HAP-1 (cell line): ENCODE measurements at regions of chr3 and their contacts with region 1.

Region 1: GRCh38 chr3:146218880-146219866 is 31.7 kb downstream of the PLSCR4 start:
- DNase-seq: peak; percentile 36 to 52
- H3K4me3 ChIP-seq: no peak overlapping the region
- H3K4me1 ChIP-seq: no peaks in the 10 kb centered on the region
- H3K27me3 ChIP-seq: no peaks in the 10 kb centered on the region

Region 2: DNA sequence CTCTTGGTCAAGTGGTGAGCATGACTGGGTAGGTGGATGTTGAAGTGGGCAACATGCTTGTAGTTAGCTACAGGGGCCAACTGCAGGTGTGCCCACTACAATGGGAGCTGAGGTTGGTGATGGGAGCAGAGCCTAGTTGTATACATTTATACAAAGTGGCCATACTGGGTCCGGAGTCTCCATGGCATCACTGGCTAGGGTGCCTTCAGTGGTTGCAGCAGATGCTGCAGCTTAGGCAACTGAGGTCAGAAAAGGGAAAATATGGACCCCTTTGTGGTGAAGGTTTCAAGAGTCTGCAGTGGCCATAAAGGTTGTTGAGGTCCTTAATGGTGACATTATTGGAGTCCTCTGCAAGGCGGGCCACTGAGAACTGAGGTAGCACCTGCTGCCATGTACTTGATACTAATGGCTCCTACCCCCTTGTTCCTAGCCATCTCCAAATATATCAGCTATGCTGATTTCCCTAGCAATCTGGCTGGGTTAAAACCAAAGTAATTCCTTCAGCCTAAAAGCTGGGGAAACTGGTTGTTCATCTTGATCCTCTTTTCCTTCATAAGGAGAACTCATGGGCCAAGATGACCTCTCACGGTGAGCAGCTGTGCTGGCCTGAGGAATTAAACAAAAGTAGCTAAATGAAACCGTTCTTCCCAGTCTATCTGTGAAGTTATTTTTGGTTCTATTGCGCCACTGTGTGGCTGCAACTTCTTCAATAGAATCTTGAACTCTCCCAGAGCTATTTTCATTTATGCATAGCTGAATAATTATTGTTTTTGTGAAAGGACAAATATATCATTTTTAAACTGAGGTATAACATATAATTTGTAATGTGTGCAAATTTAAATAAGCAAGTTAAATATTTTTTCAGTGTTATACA is 107.7 kb after region 1 on chr3:
- in situ Hi-C with region 1: loop called (anchors 10 kb)
- DNase-seq: peak; percentile 40 to 48
- H3K4me3 ChIP-seq: no peak overlapping the region
- H3K4me1 ChIP-seq: no peaks in the 10 kb centered on the region
- H3K27me3 ChIP-seq: no peaks in the 10 kb centered on the region

Region 3: GRCh38 chr3:146640955-146641867 is 422.0 kb after region 1 on chr3:
- in situ Hi-C with region 1: loop called (anchors 25 kb)
- DNase-seq: peak; percentile 47 to 62
- H3K4me3 ChIP-seq: no peak overlapping the region
- H3K4me1 ChIP-seq: no peaks in the 10 kb centered on the region
- H3K27me3 ChIP-seq: no peaks in the 10 kb centered on the region